ENCODE measurements at regions of chr22 and their contacts with region 1.

Region 1: DNA sequence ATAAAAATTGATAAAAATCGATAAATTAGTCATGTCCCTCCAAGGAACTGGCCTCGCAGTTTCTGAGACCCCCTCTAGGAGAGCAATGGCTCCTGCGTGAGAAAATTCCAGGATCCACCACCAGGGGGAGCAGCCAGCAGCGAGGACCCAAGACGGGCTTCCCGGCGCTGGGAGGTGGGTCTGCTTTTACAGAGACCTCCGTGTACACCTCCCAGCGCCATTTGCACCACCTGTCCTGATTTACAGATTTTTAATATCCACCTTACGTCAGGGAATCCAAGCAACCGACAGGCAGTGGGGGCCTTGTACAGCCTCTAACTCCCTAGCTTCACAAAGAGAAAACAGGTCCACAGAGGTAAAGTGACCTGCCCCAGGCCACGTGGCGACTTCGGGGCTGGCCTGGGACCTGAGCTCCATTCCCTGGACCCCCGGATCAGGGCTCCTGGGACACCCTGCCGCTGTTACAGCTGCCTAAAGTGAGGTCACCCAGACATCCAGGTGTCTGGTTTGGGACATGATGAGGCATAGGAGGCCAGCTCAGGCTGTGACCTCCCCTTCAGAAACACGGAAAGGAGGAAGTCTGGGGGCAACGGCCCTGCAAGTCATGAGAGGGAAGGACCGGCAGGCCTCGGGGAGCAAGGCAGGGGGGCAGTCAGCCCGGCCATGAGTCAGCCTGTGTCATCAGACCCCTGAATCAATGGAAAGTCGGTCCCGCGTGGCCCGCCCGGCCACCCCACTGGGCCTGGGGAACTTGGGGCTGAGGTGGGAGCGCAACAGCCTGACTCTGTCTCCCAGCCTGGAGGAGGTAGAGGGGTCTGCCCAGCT is 3.5 kb downstream of the OSM start:
- DNase-seq: peak; percentile 76
- CTCF ChIP-seq: peak; percentile 90

Region 2: GRCh38 chr22:30104501-30105156 is 158.5 kb before region 1 on chr22:
- CTCF ChIA-PET with region 1: interaction called, 25 read pairs
- POLR2A ChIA-PET with region 1: no interaction called
- DNase-seq: no peak
- CTCF ChIP-seq: no peak

Region 3: DNA sequence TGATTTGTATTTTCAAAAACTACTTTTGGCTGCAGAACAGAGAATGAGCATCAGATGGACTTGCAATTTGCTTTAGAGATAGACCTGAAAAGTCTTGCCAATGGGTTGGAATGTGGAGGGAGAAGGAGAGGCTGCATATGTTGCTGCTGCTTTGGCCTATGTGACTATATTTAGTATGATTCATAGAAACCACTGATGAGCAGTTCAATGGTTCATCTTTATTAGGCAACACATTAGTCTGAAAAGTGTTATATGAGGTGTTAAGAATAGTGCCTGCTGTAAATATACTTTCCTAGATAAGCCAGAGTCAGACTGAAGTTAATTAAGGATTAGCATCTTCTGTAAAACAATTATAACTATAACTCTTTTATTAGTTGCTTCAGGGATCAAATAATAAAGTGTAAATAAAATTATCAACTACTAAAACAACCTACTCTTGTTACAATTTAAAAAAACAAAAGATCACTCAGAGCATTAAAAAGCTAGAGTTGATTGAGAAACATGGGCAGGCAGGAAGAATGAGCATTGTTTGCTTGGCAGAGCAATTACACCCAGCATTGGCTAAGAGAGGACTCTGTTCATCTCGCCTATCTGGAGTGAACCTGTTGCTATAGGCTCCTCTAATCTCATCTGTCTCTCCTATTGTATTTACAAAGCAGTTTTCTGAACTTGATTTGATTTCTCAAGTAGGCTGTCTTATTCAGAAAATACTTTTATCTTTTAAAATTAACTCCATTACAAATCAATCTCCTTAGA is 146.6 kb before region 1 on chr22:
- CTCF ChIA-PET with region 1: interaction called, 10 read pairs
- POLR2A ChIA-PET with region 1: no interaction called
- DNase-seq: no peak
- CTCF ChIP-seq: no peak

Region 4: DNA sequence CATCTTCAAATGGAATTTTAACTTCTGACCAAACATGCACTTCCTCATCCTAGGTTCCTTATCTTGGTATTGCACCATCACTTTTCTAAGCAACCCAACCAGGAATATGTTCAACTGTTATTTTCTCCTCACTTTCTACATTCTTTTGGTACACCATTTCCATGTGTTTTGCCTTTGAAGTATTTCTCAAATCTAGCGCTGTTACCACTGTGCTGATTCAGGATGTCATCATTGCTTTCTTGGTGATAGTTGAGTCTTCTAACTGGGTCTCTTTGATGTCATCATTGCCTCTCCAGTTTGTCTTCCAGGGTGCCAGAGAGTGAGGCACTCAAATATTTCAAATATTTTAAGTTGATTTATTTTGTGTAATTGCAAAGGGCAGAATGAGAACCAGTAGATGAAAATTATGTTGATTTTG is 135.4 kb before region 1 on chr22:
- CTCF ChIA-PET with region 1: no interaction called
- POLR2A ChIA-PET with region 1: no interaction called
- DNase-seq: no peak
- CTCF ChIP-seq: no peak

Region 5: GRCh38 chr22:30277547-30278344 is 14.6 kb after region 1 on chr22:
- CTCF ChIA-PET with region 1: interaction called, 11 read pairs
- POLR2A ChIA-PET with region 1: no interaction called
- DNase-seq: no peak
- CTCF ChIP-seq: no peak

Measured in GM10248 (cell line).